ENCODE measurements at regions of chr2 and their contacts with region 1.

Region 1: GRCh38 chr2:73112913-73113633 is at the start of gene RAB11FIP5:
- DNase-seq: peak; percentile 85 to 93
- H3K4me3 ChIP-seq: peak within 1 kb of the TSS; percentile 82 to 87 (median 86)
- H3K27ac ChIP-seq: peak within 1 kb of the TSS; percentile 86 to 97 (median 91)
- H3K4me1 ChIP-seq: peaks cover 30 to 48% (median 39%) of the 10 kb centered on the region in 4 donors
- H3K27me3 ChIP-seq: peaks cover 0 to 20% (median 0%) of the 10 kb centered on the region in 3 donors
- CTCF ChIP-seq: no peak
- EP300 ChIP-seq: no peak
- POLR2A ChIP-seq: no peak
- total RNA-seq, gene RAB11FIP5: 4.7 to 39.1 (median 19.6) TPM

Region 2: DNA sequence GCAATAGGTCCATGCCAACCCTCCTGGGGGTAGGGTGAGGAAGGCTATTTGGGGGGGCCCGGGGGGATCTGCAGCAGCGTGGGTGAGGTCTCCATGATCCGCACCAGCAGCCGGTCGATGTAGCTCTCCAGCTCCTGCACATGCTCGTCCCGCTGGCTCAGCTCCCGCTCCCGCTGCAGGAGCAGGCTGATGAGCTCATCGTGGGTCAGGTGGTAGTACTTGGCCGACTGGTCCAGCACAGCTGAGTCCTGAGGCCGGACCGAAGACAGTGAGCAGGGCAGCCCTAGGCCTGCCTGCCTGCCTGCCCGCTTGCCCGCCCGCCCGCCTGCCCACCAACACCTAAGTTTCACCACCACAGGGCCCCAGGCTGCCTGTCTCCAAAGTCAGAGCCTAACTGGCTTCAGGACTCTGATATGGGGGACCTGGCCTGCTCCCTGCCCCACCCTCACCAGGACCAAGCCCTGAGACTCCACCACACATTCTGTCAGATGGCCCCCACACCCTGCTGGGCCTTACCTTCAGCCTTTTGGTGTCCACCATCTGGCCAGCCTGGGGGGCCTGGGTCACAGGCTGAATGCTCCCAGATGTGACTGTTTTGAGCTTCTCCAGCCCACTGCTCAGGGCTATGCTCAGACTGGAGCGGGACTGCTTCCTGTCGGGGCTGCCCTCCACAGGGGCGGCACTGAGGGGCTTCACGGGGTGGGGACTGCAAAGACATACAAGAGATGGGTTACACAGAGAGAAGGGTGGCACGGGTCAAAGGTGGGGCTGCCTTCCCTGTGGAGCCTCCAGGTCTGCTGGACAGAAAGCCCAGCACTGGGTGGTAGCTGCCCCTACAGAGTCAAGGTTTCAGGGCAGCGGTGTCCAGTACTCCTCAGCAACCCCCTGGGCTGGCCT is 37.3 kb before region 1 on chr2:
- intact Hi-C with region 1: loop called (anchors 5 kb)
- DNase-seq: no peak
- H3K4me3 ChIP-seq: no peak overlapping the region
- H3K27ac ChIP-seq: peak overlapping the region in 1 of 5 donors; percentile 54
- H3K4me1 ChIP-seq: peaks cover 7 to 18% (median 13%) of the 10 kb centered on the region in 4 donors
- H3K27me3 ChIP-seq: no peaks in the 10 kb centered on the region
- CTCF ChIP-seq: no peak
- EP300 ChIP-seq: no peak
- POLR2A ChIP-seq: no peak